Posterior vena cava (tissue), 2 donors: ENCODE measurements at regions of chr3 and their contacts with region 1.

Region 1: DNA sequence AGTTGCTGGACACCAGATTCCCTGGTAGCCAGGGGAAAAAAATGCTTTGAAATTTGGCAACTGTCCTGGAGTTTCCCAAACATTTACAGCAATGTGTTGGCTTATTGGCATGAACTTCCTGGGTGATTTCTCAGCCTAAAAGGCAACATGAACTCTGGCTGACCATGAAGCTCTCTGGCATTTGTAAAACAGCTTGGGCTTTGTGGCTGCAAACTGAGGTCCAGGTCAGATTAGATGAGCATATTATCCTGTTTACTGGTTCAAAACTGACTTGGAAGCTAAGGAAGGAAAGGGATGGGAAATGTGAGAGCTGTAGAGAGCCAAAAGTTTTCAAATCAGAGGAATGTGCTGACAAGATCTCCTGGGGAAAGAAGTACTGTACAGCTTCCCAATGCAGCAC is 139.0 kb downstream of the P3H2 start:
- DNase-seq: no peak

Region 2: DNA sequence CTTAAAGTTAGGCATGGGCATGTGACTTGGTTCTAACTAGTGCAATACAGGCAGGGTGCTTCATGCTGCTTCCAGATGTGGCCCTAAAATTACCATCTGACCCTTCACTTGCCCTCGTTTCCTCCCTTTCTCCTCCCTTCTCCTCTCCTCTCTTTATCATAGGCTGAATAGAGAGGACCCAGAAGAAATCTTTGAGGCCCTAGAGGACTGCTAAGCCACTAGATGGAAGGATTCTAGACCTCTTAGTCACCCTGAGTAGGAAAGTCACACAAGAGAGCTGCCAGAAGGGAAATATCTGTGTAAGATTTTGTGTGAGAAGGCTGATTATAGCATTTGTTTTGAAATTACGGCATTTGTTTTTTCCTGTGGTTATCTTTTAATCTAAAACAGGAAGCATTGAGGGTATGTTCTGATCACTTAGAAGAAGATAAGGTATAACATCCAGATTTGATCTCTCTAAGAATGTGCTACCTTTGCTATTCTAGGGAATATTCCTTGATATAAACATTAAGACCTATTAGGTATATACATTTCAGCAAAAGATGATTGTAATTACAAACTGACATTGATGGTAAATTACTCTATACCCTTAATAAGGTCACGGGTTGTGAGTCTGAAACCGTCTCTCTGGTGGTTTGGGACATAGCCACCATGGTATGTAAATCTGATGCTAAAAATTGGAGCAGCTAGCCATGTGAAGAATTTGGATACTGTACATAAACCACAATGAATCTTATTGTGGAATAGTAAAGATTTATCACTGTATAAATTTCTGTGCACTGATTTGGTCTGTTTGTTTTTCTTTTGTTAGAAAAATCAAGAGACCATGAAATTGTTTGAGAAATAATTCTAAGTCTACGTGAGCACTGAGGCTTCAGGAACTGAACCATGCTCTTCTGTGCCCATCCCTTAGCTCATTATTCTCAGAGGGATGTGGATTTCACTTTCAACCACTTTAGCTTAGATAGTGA is 266.4 kb before region 1 on chr3:
- intact Hi-C with region 1: no loop called
- DNase-seq: no peak

Region 3: DNA sequence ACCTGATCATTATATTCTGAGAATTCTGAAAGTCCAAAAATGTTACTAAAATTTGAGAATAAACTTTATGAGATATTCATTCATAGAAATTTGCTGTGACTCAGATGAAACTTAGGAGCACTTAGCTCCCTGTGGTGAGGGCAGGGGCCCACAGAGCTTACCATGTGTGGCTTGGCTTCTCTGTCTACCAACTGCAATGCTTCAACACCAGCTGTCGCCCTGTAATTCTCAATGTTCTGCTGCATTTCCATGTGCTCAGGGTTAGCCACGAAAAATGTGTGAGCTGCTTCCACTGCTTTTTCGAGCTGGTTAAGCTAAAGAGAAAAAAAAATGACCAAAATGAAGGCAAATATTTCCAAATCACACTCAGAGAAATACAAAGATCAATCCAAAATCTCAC is 13.5 kb after region 1 on chr3:
- intact Hi-C with region 1: loop called in 1 of 2 experiments (anchors 1 kb)
- DNase-seq: no peak

Region 4: GRCh38 chr3:190024912-190025311 is 43.2 kb after region 1 on chr3:
- intact Hi-C with region 1: no loop called
- DNase-seq: no peak